Heart left ventricle (tissue), 16 donors: ENCODE measurements at regions of chr3 and their contacts with region 1.

Region 1: DNA sequence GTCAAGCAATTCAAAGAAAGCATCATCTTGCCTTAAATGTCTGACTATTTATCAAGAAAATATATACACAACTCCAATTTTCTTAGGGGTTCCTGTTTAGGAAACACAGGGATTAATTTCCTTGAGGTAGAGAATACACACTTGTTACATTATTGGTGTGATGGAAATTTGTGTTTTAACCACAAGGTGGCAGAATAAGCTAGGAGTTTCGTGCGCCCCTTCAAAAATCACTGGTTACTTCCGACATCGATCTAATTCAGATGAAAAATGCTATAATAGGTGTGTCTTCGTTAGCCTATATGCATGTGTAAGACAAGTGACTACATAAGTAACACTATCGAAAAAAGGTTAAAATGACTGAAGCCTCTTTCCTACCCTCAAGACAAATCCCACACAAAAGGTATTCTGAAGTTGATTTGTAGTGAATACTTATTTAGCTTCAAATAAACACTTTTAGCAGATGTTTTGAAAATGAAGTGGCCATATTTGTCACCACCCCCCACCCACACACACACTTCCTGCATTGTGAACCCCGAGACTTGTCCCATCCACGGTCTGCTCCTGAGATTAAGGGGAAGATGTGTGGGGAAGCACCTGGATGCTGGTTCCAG is 246.5 kb downstream of the ROBO1 start:
- DNase-seq: no peak
- ATAC-seq: no peak
- H3K4me3 ChIP-seq: no peak overlapping the region
- H3K27ac ChIP-seq: no peak overlapping the region
- H3K4me1 ChIP-seq: no peaks in the 10 kb centered on the region
- H3K27me3 ChIP-seq: peaks cover 0 to 10% (median 0%) of the 10 kb centered on the region in 9 donors
- CTCF ChIP-seq: peak; percentile 35 to 65 (median 49)
- POLR2A ChIP-seq: no peak

Region 2: GRCh38 chr3:79215286-79215685 is 306.1 kb before region 1 on chr3:
- intact Hi-C with region 1: no loop called
- DNase-seq: no peak
- ATAC-seq: no peak
- H3K4me3 ChIP-seq: no peak overlapping the region
- H3K27ac ChIP-seq: no peak overlapping the region
- H3K4me1 ChIP-seq: no peaks in the 10 kb centered on the region
- H3K27me3 ChIP-seq: no peaks in the 10 kb centered on the region
- CTCF ChIP-seq: no peak
- POLR2A ChIP-seq: no peak

Region 3: GRCh38 chr3:79606414-79606813 is 85.1 kb after region 1 on chr3:
- intact Hi-C with region 1: no loop called
- DNase-seq: no peak
- ATAC-seq: no peak
- H3K4me3 ChIP-seq: no peak overlapping the region
- H3K27ac ChIP-seq: no peak overlapping the region
- H3K4me1 ChIP-seq: no peaks in the 10 kb centered on the region
- H3K27me3 ChIP-seq: no peaks in the 10 kb centered on the region
- CTCF ChIP-seq: no peak
- POLR2A ChIP-seq: no peak

Region 4: DNA sequence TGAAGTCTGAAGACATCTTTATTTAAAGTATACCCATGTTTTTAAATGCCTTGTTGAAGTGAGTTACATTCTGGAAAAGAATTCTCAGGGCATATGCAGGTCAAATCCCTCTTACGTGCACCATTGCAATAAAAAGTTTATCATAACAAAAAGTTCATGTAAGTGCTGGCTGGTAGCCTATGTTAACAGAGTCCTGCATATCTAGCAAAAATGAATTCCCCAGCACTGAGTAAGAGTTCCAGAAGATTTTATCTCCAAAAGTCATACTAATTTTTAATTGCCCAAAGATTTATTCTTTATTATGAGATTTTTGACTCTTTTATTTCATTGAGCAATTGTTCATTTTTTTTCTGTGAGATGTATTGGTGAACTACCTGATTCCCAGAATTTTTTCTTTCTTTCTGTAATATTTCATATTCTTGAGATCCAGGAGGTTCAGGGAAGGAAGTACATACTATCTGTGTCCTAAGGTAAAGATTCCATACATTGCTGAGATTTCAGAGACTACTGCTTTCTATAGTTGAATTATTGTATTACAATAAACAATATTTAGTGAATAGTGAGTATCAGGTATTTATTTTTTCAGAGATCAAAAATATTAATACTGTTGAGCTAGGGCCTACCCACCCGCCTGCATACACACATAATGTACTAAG is 351.3 kb after region 1 on chr3:
- intact Hi-C with region 1: no loop called
- DNase-seq: no peak
- ATAC-seq: no peak
- H3K4me3 ChIP-seq: no peak overlapping the region
- H3K27ac ChIP-seq: no peak overlapping the region
- H3K4me1 ChIP-seq: no peaks in the 10 kb centered on the region
- H3K27me3 ChIP-seq: no peaks in the 10 kb centered on the region
- CTCF ChIP-seq: no peak
- POLR2A ChIP-seq: no peak

Region 5: DNA sequence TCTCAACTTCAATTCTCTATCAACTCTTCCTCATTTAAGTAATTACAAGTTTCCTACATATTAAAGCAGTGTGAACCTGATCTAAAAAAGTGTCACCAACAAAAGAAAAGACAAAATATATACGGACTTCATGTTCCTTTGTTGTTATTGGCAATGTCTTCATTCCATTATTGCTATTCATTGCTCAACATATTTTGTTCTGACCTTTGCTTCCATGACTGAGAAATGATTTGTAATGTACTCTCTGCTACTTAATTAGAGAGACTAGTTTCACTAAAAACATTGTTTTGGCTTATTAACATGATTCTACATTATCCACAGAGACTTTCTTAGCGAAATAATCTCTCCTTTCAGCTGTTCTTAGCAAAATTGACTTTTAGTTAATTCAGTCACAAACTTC is 903.6 kb after region 1 on chr3:
- intact Hi-C with region 1: no loop called
- DNase-seq: no peak
- ATAC-seq: no peak
- H3K4me3 ChIP-seq: no peak overlapping the region
- H3K27ac ChIP-seq: no peak overlapping the region
- H3K4me1 ChIP-seq: no peaks in the 10 kb centered on the region
- H3K27me3 ChIP-seq: no peaks in the 10 kb centered on the region
- CTCF ChIP-seq: no peak
- POLR2A ChIP-seq: no peak

Region 6: DNA sequence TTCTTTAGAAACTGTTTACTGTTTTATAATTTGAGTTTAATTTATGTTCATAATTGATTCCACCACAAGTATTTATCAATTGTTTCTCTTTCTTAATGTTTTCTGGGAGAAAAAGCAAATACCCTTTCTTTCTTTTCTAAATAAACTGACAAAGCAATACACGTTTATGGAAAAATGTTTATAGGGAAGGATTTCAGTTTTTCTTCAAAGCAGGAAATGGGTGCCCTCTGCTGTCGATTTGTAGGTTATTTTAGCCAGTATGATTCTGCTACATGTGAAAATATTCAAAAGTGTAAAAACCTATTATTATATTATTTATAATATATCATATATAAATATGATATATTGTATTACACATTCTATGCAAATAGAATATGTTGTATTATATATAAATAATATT is 1167.5 kb after region 1 on chr3:
- intact Hi-C with region 1: loop called in 7 of 10 experiments (anchors 5 to 10 kb)
- DNase-seq: no peak
- ATAC-seq: no peak
- H3K4me3 ChIP-seq: no peak overlapping the region
- H3K27ac ChIP-seq: no peak overlapping the region
- H3K4me1 ChIP-seq: no peaks in the 10 kb centered on the region
- H3K27me3 ChIP-seq: no peaks in the 10 kb centered on the region
- CTCF ChIP-seq: peak in 6 of 12 donors; percentile 8 to 25 (median 14)
- POLR2A ChIP-seq: no peak

Region 7: DNA sequence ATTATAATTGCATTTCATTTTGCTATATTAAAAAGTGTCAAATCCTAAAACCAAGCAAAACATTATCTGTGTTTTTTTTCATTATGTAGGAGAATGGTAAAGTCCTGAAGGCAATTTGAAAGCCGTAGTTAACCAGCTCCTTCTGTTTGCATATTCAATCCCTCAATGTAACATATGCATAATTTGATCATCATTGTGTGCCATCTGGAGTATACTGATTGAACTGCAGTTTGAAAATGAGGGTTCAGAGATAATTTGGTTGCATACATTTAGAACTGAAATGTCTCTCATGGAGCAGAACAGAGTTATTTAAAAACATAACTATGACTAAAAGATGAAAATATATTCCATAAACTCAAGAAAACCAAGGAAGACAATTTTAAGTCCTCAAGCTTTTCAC is 1721.5 kb after region 1 on chr3:
- intact Hi-C with region 1: loop called in 1 of 10 experiments (anchors 10 kb)
- DNase-seq: no peak
- ATAC-seq: no peak
- H3K4me3 ChIP-seq: no peak overlapping the region
- H3K27ac ChIP-seq: no peak overlapping the region
- H3K4me1 ChIP-seq: no peaks in the 10 kb centered on the region
- H3K27me3 ChIP-seq: no peaks in the 10 kb centered on the region
- CTCF ChIP-seq: peak in 3 of 12 donors; percentile 5 to 29 (median 23)
- POLR2A ChIP-seq: no peak